Prostate gland (tissue), 2 donors: ENCODE measurements at regions of chrX and their contacts with region 1.

Region 1: GRCh38 chrX:49761481-49761880 is 65.7 kb upstream of the PAGE1 start:
- DNase-seq: no peak
- H3K4me3 ChIP-seq: no peak overlapping the region
- H3K27ac ChIP-seq: no peak overlapping the region
- H3K4me1 ChIP-seq: no peaks in the 10 kb centered on the region
- H3K27me3 ChIP-seq: no peaks in the 10 kb centered on the region
- CTCF ChIP-seq: peak in 2 of 4 experiments; percentile 25 to 28
- POLR2A ChIP-seq: no peak

Region 2: GRCh38 chrX:49850028-49850427 is 88.5 kb after region 1 on chrX:
- intact Hi-C with region 1: no loop called
- DNase-seq: no peak
- H3K4me3 ChIP-seq: no peak overlapping the region
- H3K27ac ChIP-seq: no peak overlapping the region
- H3K4me1 ChIP-seq: no peaks in the 10 kb centered on the region
- H3K27me3 ChIP-seq: no peaks in the 10 kb centered on the region
- CTCF ChIP-seq: no peak
- POLR2A ChIP-seq: no peak

Region 3: DNA sequence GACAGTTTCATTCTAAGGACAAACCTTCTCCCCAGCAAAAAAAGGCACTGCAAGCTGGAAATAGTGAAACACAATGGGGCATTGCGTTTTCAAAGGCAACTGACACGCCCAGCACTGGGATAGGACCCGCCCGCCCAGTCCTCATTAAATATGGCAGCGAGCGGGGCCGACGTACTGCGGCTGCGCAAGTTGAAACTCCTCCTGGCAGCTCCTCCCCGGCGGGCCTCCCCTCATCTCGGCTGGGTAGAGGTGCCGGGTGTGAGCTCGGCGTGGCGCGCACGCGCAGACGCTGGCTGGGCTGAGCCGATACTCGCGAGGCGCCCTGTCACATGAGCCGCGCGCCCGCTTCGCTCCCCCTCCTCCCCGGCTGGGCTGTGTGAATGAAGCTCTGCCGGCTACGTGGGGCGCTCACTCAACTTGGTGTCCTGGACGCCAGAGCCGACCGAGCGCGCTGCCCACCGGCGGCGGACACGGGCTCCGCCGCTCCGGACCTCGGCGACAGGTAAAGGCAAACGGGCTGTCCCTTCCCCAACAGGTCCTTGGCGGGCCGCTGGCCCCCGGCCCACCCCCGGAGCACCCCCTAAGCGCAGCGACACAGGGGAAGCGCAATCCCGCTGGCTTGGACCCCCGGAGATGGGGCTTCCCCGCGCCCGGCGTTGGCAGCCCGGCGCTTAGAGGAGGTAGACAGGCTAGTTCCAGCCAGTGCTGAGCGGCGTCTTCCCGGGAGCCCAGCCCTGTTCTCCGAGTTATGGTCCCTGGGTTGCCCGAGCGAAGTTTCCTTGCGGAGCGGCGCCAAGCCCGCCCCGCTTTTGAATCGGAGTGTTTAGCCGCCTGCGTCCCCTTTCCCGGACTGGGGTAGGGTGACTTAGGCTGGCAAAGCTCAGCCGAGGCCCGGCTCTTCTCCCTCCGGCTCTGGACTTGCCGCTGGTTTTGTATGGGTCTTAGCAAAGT is 161.1 kb after region 1 on chrX and contains the start of gene CLCN5:
- intact Hi-C with region 1: loop called (anchors 10 kb)
- DNase-seq: peak; percentile 93
- H3K4me3 ChIP-seq: peak within 1 kb of the TSS; percentile 52
- H3K27ac ChIP-seq: peak within 1 kb of the TSS; percentile 82 to 83
- H3K4me1 ChIP-seq: no peaks in the 10 kb centered on the region
- H3K27me3 ChIP-seq: no peaks in the 10 kb centered on the region
- CTCF ChIP-seq: no peak
- POLR2A ChIP-seq: peak; percentile 65
- total RNA-seq, gene CLCN5: 2.0 to 13.6 TPM